Posterior cingulate gyrus (tissue), 11 donors: ENCODE measurements at regions of chr2 and their contacts with region 1.

Region 1: GRCh38 chr2:154375579-154375931 is 322.9 kb upstream of the KCNJ3 start:
- DNase-seq: no peak

Region 2: DNA sequence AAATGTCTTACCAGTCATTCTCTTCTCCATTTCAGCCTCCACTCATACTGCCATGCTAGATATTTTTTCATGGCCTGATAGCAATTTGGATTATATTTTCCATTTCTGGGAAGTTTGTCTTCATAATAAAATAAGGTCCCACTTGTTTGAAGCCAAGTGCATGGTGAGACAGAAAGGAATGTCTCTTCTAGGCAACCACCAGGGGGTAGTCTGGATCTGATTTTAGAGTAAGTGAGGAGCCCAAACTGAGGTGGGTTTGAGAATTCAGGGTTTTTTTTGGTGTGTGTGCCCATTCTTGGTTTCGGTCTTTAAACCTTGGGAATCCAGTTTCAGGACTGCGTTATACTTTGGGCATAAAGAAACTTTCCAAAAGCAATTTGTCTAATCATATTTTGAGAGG is 1212.5 kb before region 1 on chr2:
- intact Hi-C with region 1: loop called (anchors 10 kb)
- DNase-seq: peak in 2 of 10 donors; percentile 2 to 12

Region 3: DNA sequence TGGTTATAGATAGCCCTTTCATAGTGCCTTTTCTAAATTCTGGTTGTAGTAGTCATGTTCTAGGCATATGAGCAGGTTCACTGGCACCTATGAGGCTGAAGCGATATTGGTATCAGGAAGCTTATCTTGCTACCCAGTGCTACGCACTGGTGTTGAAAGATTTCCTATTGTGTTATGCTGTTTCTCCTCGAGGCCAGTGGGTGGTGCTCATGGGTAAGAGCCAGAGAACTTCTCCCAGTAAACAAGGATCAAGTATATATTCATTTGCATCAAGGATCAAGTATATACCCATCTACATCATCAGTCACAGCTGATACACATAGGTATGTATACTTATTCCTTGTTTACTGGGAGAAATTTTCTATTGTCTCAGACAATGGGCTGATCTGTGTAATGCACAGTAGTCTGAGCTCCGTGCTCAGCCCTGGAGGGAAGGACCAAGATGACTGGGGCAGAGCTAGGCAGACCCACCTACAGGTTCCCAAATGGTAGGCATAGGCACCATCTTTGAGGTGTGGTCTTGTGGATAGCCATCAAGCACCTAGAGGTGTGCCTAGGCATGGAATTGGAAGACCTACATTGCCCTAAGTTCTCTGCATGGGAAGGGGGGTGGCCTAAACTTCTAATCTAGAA is 605.1 kb before region 1 on chr2:
- intact Hi-C with region 1: loop called (anchors 1 kb)
- DNase-seq: peak in 2 of 10 donors; percentile 3 to 37

Region 4: GRCh38 chr2:153787612-153788011 is 587.9 kb before region 1 on chr2:
- intact Hi-C with region 1: loop called (anchors 5 kb)
- DNase-seq: no peak

Region 5: DNA sequence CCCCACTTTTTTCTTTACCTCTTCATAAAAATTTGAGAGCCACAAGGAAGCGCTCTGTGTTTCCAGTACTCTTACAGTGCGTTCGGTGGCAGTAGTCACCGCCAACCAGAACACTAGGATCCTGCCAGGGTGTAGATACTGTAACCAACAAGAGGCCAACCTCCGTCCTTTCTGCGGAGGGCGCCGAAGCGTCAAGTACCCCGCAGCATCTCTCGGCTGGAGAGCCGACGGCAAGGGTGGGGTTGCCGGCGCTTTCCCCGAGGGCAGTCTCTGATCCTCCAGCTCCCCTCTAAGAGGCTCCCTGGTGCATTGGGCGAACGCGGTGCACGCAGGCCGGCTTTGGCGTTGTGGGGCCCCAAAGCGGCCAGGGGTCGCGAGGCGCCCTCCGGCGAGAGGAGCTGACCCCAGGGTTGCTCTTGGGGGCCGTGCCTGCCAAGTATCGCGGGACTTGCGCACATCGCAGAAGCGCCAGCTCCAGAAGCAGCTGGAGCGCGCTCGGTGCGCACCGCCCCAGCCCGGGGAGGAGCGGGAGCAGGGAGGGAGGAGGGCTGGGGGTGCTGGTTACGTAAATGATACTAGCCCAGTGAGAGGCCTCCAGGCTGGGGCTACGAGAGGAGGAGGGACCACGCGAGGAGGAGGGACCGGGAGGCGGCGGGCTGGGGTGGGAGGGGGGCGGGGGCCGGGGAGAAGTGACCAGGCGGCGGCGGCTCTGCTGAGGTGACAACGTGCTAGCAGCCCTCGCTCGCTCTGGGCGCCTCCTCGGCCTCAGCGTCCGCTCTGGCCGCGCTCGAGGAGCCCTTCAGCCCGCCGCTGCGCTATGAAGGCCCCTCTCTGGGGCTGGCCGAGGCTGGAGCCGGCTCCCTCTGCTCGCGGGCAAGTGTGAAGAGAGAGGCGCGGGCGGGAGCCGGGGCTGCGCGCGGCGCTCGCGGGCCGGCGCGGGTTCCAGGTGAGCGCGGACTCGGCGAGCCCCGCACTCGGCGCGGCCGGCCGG is 504.0 kb before region 1 on chr2 and contains the start of gene GALNT13:
- intact Hi-C with region 1: loop called (anchors 1 kb)
- DNase-seq: peak; percentile 80 to 98 (median 86)

Region 6: DNA sequence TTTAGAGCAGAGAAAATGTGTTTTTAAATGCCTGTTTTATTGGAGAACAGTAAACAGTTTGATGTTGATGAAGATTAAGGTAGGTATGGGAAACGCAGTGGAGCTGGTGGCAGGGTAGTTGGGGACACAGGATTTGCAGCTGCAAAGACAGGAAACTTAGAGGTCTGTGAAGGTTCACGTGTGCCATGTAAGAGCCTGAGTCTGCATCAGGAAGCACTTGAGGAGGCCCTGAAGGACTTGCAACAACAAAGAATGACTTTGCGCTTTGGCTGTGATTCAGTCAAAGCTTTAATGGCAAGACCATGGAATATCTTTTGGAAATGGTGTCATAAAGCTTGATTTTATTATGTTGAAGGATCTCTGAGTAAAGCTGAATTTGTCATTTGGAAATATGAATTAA is 24.6 kb before region 1 on chr2:
- intact Hi-C with region 1: no loop called
- DNase-seq: no peak